ENCODE measurements at regions of chr5 and their contacts with region 1.

Region 1: DNA sequence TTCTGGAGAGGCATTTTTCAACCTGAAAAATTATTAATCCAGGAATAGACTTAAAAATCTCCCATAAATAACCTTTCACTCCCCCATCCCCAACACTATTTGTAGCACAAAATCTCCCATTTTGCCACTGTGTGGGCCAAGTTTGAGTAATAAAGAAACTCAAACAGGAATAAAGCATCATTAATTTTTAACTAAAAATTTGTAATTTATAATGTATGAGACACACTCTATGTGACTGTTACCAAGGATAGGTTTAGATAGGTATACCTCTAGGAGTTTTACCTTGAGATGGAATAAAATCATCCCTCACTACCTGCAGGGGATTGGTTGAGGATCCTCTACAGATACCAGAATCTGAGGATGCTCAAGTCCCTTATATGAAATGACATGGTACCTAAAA is 30.1 kb downstream of the CHD1 start:
- DNase-seq: no peak
- H3K4me3 ChIP-seq: no peak overlapping the region
- H3K4me3 Mint-ChIP-seq: no peak overlapping the region
- H3K27ac ChIP-seq: no peak overlapping the region
- H3K27ac Mint-ChIP-seq: peak overlapping the region in 1 of 7 donors; percentile 32
- H3K4me1 ChIP-seq: no peaks in the 10 kb centered on the region
- H3K4me1 Mint-ChIP-seq: peaks cover 3 to 8% (median 4%) of the 10 kb centered on the region in 4 donors
- H3K27me3 ChIP-seq: no peaks in the 10 kb centered on the region
- H3K27me3 Mint-ChIP-seq: no peaks in the 10 kb centered on the region

Region 2: GRCh38 chr5:98700730-98701129 is 198.0 kb before region 1 on chr5:
- CTCF ChIA-PET with region 1: no interaction called
- POLR2A ChIA-PET with region 1: no interaction called
- intact Hi-C with region 1: no loop called
- DNase-seq: no peak
- H3K4me3 ChIP-seq: no peak overlapping the region
- H3K4me3 Mint-ChIP-seq: no peak overlapping the region
- H3K27ac ChIP-seq: no peak overlapping the region
- H3K27ac Mint-ChIP-seq: no peak overlapping the region
- H3K4me1 ChIP-seq: no peaks in the 10 kb centered on the region
- H3K4me1 Mint-ChIP-seq: no peaks in the 10 kb centered on the region
- H3K27me3 ChIP-seq: no peaks in the 10 kb centered on the region
- H3K27me3 Mint-ChIP-seq: peaks cover 4 to 11% of the 10 kb centered on the region in 2 donors

Region 3: GRCh38 chr5:98796197-98796972 is 102.4 kb before region 1 on chr5:
- CTCF ChIA-PET with region 1: no interaction called
- POLR2A ChIA-PET with region 1: no interaction called
- intact Hi-C with region 1: no loop called
- DNase-seq: peak; percentile 40 to 61 (median 56)
- H3K4me3 ChIP-seq: no peak overlapping the region
- H3K4me3 Mint-ChIP-seq: no peak overlapping the region
- H3K27ac ChIP-seq: no peak overlapping the region
- H3K27ac Mint-ChIP-seq: peak overlapping the region in 1 of 7 donors; percentile 62
- H3K4me1 ChIP-seq: no peaks in the 10 kb centered on the region
- H3K4me1 Mint-ChIP-seq: peaks cover 0 to 6% (median under 1%) of the 10 kb centered on the region in 4 donors
- H3K27me3 ChIP-seq: no peaks in the 10 kb centered on the region
- H3K27me3 Mint-ChIP-seq: no peaks in the 10 kb centered on the region

Region 4: DNA sequence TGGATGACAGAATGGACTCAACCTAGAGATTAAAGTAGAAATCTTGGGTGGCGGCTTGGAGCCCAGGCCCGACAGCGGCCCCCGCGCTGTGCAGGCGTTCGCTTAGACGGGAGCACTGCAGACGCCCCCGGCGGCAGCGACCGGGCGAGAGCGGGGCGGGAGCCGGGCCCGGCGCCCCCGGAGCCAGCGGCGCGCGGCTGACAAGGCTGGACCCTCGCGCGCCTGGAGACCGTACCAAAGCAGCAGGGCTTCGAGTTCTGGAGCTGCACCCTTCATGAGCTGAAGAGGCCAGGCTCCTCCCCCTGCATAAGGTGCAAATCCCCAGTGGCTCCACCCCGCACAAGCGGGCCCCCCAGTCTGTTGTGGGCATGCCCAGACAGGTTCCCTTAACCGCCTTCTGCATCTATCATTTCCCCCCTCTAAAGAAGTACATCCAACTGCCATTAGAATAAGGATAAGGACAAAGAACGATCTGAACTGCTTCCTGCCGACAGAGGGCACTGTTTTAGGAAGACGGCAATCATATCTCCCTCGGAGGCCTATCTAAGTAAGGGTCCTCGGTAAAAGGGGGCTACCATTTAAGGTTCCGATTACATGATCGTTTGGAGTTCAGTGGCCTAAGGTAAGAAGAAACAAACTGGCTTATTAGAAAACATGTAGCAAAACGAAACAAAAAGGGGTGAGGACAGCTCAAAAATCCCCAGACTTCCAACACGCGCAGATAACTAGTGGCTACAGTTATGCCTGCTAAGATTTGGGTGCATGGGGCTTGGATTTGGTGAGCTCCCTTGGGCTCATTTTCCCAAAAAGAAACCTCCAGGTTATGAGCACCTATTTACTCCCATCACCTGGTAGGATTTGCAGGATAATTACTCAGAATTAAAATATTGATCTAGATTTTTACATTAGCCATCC is 59.0 kb before region 1 on chr5:
- CTCF ChIA-PET with region 1: no interaction called
- POLR2A ChIA-PET with region 1: no interaction called
- intact Hi-C with region 1: no loop called
- DNase-seq: peak in 2 of 5 donors; percentile 7 to 11
- H3K4me3 ChIP-seq: no peak overlapping the region
- H3K4me3 Mint-ChIP-seq: peak overlapping the region in 6 of 8 donors; percentile 7 to 61 (median 33)
- H3K27ac ChIP-seq: no peak overlapping the region
- H3K27ac Mint-ChIP-seq: no peak overlapping the region
- H3K4me1 ChIP-seq: no peaks in the 10 kb centered on the region
- H3K4me1 Mint-ChIP-seq: peaks cover 0 to 5% (median 3%) of the 10 kb centered on the region in 4 donors
- H3K27me3 ChIP-seq: no peaks in the 10 kb centered on the region
- H3K27me3 Mint-ChIP-seq: no peaks in the 10 kb centered on the region

Region 5: GRCh38 chr5:98865690-98866089 is 33.1 kb before region 1 on chr5:
- CTCF ChIA-PET with region 1: interaction called, 4 read pairs
- POLR2A ChIA-PET with region 1: interaction called, 3 read pairs
- intact Hi-C with region 1: loop called (anchors 5 kb)
- DNase-seq: no peak
- H3K4me3 ChIP-seq: no peak overlapping the region
- H3K4me3 Mint-ChIP-seq: no peak overlapping the region
- H3K27ac ChIP-seq: no peak overlapping the region
- H3K27ac Mint-ChIP-seq: peak overlapping the region in 2 of 7 donors; percentile 35 to 54
- H3K4me1 ChIP-seq: no peaks in the 10 kb centered on the region
- H3K4me1 Mint-ChIP-seq: peaks cover 0 to 3% (median 0%) of the 10 kb centered on the region in 4 donors
- H3K27me3 ChIP-seq: no peaks in the 10 kb centered on the region
- H3K27me3 Mint-ChIP-seq: no peaks in the 10 kb centered on the region

Region 6: GRCh38 chr5:98911280-98912040 is 12.7 kb after region 1 on chr5:
- CTCF ChIA-PET with region 1: no interaction called
- POLR2A ChIA-PET with region 1: no interaction called
- intact Hi-C with region 1: loop called (anchors 1 kb)
- DNase-seq: no peak
- H3K4me3 ChIP-seq: no peak overlapping the region
- H3K4me3 Mint-ChIP-seq: peak overlapping the region in 2 of 8 donors; percentile 7 to 26
- H3K27ac ChIP-seq: no peak overlapping the region
- H3K27ac Mint-ChIP-seq: peak overlapping the region in 4 of 7 donors; percentile 0 to 69 (median 20)
- H3K4me1 ChIP-seq: peaks cover 80% of the 10 kb centered on the region
- H3K4me1 Mint-ChIP-seq: peaks cover 50 to 78% (median 64%) of the 10 kb centered on the region in 4 donors
- H3K27me3 ChIP-seq: no peaks in the 10 kb centered on the region
- H3K27me3 Mint-ChIP-seq: no peaks in the 10 kb centered on the region

Measured in CD4-positive, alpha-beta memory T cell (primary cell).